ENCODE measurements at regions of chr22 and their contacts with region 1.

Region 1: GRCh38 chr22:27150544-27150941 is 493.2 kb downstream of the MIAT start:
- DNase-seq: no peak
- H3K4me3 ChIP-seq: no peak overlapping the region
- H3K27ac ChIP-seq: no peak overlapping the region
- H3K4me1 ChIP-seq: peaks cover 35% of the 10 kb centered on the region
- H3K27me3 ChIP-seq: no peaks in the 10 kb centered on the region
- CTCF ChIP-seq: no peak
- POLR2A ChIP-seq: no peak

Region 2: DNA sequence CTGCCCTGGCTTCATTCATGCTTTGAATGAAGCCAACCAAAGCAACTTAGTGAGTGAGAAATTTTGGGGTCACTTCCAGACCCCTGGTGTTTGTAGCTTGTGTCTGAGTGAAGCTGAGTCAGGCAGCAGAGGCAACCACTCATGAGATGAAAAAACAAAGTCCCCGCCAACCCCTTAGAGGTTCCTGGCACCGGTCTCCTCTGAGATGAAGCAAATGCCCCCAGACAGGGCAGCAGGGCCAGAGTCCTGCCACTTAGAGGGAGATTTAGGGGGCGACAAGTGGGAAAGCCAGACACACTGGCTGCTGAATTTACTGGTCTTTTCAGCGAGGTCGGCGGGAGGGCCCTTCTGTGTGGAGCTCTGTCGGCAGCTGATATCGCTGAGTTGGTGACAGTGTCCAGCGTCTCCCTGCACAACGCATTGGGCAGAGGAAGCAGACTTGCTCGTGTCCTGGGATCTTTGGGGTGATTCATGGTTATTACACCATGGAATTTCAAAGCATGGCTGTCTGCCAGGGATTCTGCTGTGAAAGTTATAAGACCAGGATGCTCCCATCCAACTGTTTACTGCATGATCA is 10.5 kb before region 1 on chr22:
- CTCF ChIA-PET with region 1: interaction called, 11 read pairs
- POLR2A ChIA-PET with region 1: no interaction called
- dilution Hi-C with region 1: no loop called
- intact Hi-C with region 1: no loop called
- DNase-seq: peak; percentile 68
- H3K4me3 ChIP-seq: no peak overlapping the region
- H3K27ac ChIP-seq: peak overlapping the region; percentile 38
- H3K4me1 ChIP-seq: peaks cover 17% of the 10 kb centered on the region
- H3K27me3 ChIP-seq: no peaks in the 10 kb centered on the region
- CTCF ChIP-seq: no peak
- POLR2A ChIP-seq: no peak

Region 3: DNA sequence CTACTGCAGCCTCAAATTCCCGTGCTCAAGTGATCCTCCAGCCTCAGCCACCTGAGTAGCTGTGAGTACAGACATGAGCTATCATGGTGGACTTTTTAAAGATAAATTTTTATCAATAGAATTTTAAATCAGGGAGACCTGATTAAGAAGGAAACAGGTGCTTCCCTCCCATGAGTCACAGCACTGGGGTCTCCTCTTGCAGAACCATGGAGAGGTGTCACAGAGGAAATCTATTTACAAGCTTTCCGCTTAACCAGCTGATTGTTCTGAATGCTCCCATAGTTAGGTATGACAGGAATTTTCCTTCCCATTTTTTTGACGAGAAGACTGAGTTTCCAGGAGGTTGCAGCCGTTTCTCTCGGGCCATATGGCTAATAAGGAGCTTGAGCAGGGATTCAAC is 23.0 kb after region 1 on chr22:
- CTCF ChIA-PET with region 1: interaction called, 3 read pairs
- POLR2A ChIA-PET with region 1: no interaction called
- dilution Hi-C with region 1: no loop called
- intact Hi-C with region 1: loop called (anchors 2 kb)
- DNase-seq: peak; percentile 79
- H3K4me3 ChIP-seq: no peak overlapping the region
- H3K27ac ChIP-seq: peak overlapping the region; percentile 76
- H3K4me1 ChIP-seq: peaks cover 18% of the 10 kb centered on the region
- H3K27me3 ChIP-seq: no peaks in the 10 kb centered on the region
- CTCF ChIP-seq: no peak
- POLR2A ChIP-seq: no peak

Region 4: GRCh38 chr22:27203276-27203660 is 52.7 kb after region 1 on chr22:
- CTCF ChIA-PET with region 1: no interaction called
- POLR2A ChIA-PET with region 1: no interaction called
- dilution Hi-C with region 1: no loop called
- intact Hi-C with region 1: loop called (anchors 2 kb)
- DNase-seq: no peak
- H3K4me3 ChIP-seq: no peak overlapping the region
- H3K27ac ChIP-seq: peak overlapping the region; percentile 29
- H3K4me1 ChIP-seq: peaks cover 12% of the 10 kb centered on the region
- H3K27me3 ChIP-seq: no peaks in the 10 kb centered on the region
- CTCF ChIP-seq: no peak
- POLR2A ChIP-seq: no peak

Region 5: DNA sequence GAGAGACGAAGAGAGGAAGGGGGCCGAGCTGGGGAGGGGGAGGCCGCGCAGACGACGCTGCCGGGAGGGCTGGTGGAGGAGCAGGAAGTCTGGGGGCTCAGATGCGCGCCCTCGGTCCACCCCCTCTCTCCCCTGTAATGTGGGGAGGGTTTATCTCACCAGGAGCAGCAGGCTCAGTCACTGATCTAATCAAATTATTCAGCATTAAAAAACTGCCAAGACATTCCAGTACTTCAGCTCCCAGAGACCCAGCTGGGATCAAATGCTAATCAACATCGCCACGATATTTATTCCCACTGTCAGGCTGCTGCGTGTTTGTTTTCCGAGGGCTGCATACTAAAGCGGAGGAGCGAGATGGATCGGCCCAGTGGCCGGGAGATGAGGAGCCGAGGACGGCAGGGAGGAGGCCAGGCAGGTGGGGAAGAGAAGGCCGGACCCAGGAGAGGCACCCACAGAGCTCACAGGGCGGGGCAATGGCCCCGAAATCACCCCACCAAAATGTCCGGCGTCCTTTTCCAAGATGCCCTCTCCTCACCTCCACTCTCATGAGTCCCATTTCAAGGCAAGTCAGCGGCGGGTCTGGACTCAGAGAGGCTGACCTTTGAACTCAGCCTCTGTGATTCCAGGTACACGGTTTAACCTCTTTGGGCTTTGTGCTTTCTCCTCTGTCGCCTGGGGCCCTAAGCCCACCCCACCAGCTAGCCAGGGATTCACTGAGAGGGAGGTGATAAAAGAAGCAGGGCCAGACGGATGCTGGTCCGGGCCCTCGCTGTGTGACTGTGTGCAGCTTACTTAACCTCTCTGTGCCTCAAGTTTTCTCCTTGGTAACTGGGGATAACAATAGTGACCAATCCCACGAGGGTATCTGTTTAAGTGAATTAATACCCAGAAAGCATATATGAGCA is 148.9 kb after region 1 on chr22:
- CTCF ChIA-PET with region 1: no interaction called
- POLR2A ChIA-PET with region 1: no interaction called
- dilution Hi-C with region 1: no loop called
- intact Hi-C with region 1: loop called (anchors 2 kb)
- DNase-seq: peak; percentile 85
- H3K4me3 ChIP-seq: peak overlapping the region in 2 of 3 experiments; percentile 3 to 34
- H3K27ac ChIP-seq: peak overlapping the region; percentile 40
- H3K4me1 ChIP-seq: peaks cover 27% of the 10 kb centered on the region
- H3K27me3 ChIP-seq: no peaks in the 10 kb centered on the region
- CTCF ChIP-seq: no peak
- POLR2A ChIP-seq: peak; percentile 54

Region 6: GRCh38 chr22:27420817-27421361 is 270.3 kb after region 1 on chr22:
- CTCF ChIA-PET with region 1: no interaction called
- POLR2A ChIA-PET with region 1: no interaction called
- dilution Hi-C with region 1: no loop called
- intact Hi-C with region 1: no loop called
- DNase-seq: peak; percentile 98
- H3K4me3 ChIP-seq: no peak overlapping the region
- H3K27ac ChIP-seq: peak overlapping the region; percentile 97
- H3K4me1 ChIP-seq: peaks cover 43% of the 10 kb centered on the region
- H3K27me3 ChIP-seq: peaks cover 0 to 2% of the 10 kb centered on the region in 2 experiments
- CTCF ChIP-seq: no peak
- POLR2A ChIP-seq: peak; percentile 38